ENCODE measurements at regions of chr2 and their contacts with region 1.

Region 1: DNA sequence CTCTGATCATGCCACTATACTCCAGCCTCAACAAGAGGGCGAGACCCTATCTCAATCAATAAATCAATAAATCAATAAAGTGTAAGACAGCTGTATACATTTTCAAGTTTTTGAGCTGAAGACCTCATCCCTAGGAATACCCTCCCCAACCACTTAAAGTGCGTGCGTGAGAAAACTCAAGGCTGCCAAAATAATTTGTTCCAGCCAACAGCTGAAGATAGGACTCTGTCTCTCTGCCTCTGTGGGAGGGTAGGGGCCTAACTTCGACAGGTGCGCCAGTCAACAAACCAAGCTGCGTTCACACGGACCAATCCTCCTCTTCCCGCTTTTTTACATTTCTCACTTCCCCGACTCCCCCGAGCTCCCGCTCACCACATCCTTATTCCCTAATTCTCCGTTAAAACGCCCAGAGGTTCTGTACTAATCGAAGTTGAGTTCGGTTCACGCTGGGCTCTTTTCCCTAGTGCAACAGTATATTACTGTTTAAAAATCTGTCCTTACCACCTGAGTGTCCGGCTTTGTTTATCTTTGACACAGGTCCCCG is 618 bp downstream of the POLR2D start:
- DNase-seq: peak; percentile 23
- H3K4me3 Mint-ChIP-seq: peak overlapping the region; percentile 92
- H3K27ac Mint-ChIP-seq: peak overlapping the region; percentile 74
- H3K4me1 Mint-ChIP-seq: peaks cover 17% of the 10 kb centered on the region
- H3K27me3 Mint-ChIP-seq: no peaks in the 10 kb centered on the region
- CTCF ChIP-seq: no peak

Region 2: DNA sequence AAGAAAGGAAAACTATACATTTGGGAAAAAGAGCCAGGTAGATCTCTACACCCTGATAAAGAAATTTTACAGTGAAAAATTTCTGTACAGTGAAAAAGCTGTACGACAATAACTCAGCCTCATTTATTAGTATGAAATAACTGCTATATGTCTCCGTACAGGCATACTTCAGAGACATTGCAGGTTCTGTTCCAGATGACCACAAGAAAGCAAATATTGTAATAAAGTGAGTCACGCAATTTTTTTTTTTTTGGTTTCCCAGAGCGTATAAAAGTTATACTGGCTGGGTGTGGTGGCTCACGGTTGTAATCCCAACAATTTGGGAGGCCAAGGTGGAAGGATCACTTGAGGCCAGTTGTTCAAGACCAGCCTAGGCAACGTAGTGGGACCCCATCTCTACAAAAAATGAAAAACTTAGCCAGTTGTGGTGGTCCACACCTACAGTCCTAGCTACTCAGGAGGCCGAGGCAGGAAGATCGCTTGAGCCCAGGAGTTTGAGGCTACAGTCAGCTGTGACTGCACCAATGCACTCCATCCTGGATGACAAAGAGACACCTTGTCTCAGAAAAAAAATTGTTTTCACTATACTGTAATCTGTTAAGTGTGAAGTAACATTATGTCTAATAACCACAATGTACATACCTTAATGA is 56.6 kb after region 1 on chr2:
- CTCF ChIA-PET with region 1: interaction called, 15 read pairs
- intact Hi-C with region 1: no loop called
- DNase-seq: peak; percentile 12
- H3K4me3 Mint-ChIP-seq: no peak overlapping the region
- H3K27ac Mint-ChIP-seq: no peak overlapping the region
- H3K4me1 Mint-ChIP-seq: no peaks in the 10 kb centered on the region
- H3K27me3 Mint-ChIP-seq: no peaks in the 10 kb centered on the region
- CTCF ChIP-seq: no peak

Region 3: GRCh38 chr2:128008074-128008672 is 150.8 kb after region 1 on chr2:
- CTCF ChIA-PET with region 1: no interaction called
- intact Hi-C with region 1: no loop called
- DNase-seq: no peak
- H3K4me3 Mint-ChIP-seq: no peak overlapping the region
- H3K27ac Mint-ChIP-seq: no peak overlapping the region
- H3K4me1 Mint-ChIP-seq: no peaks in the 10 kb centered on the region
- H3K27me3 Mint-ChIP-seq: no peaks in the 10 kb centered on the region
- CTCF ChIP-seq: no peak